Tibial artery (tissue), 4 donors: ENCODE measurements at regions of chr6 and their contacts with region 1.

Region 1: GRCh38 chr6:121430514-121431460 is 4.7 kb upstream of the GJA1 start:
- DNase-seq: no peak
- H3K4me3 ChIP-seq: no peak overlapping the region
- H3K27ac ChIP-seq: peak overlapping the region in 1 of 2 donors; percentile 23
- H3K4me1 ChIP-seq: peaks cover 0 to 5% (median 0%) of the 10 kb centered on the region in 4 donors
- H3K27me3 ChIP-seq: no peaks in the 10 kb centered on the region
- CTCF ChIP-seq: peak; percentile 63 to 85

Region 2: GRCh38 chr6:121521892-121522664 is 91.3 kb after region 1 on chr6:
- intact Hi-C with region 1: loop called (anchors 10 kb)
- DNase-seq: peak in 1 of 2 donors; percentile 45
- H3K4me3 ChIP-seq: peak overlapping the region; percentile 22 to 26
- H3K27ac ChIP-seq: peak overlapping the region; percentile 72 to 84
- H3K4me1 ChIP-seq: peaks cover 0 to 56% (median 8%) of the 10 kb centered on the region in 4 donors
- H3K27me3 ChIP-seq: no peaks in the 10 kb centered on the region
- CTCF ChIP-seq: no peak

Region 3: DNA sequence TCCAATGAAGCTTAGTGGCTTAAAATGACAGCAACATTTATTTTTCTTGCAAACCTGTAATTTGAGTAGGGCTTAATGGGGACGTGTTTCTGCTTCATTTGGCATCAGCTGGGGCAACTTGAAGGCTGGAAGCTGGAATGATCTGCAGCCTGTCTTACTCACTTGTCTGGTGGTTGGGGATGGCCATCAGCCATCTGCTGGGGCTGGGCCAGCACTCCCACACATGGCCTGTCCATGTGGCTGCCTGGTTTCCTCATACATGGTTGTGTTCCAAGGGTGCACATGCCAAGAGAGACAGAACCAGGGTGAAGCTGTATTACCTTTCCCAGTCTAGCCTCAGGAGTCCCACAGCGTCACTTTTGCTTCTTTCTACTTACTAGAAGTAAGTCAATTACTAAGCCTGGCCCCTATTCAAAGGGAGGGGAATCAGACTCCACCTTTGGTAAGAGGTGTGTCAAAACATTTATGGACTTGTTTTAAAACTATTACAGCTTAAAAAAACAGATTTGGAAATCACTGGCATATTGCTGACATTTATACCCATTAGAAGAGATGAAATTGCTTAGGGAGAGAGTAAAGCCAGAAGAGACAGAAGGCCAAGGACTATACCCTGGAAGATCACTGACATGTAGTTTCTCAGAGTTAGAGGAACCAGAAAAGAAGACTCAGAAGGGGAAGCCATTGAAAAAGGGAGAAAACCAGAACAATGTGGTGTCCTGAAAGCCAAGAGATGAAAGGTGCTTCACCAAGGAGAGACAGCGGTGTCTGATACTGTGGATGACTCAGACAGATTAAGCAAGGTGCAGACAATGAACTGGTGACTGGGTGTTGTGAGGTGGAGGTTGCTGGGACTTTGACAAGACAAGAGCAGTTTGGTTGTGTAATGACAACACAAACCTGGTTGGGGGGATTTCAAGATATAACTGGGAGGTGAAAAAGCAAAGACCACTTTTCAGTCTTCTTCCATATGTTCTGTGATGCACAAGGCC is 349.8 kb after region 1 on chr6:
- intact Hi-C with region 1: loop called (anchors 10 kb)
- DNase-seq: peak; percentile 88 to 96
- H3K4me3 ChIP-seq: no peak overlapping the region
- H3K27ac ChIP-seq: peak overlapping the region; percentile 56 to 68
- H3K4me1 ChIP-seq: peaks cover 0 to 38% (median 11%) of the 10 kb centered on the region in 4 donors
- H3K27me3 ChIP-seq: no peaks in the 10 kb centered on the region
- CTCF ChIP-seq: no peak

Region 4: GRCh38 chr6:121849477-121849876 is 418.7 kb after region 1 on chr6:
- intact Hi-C with region 1: loop called (anchors 5 kb)
- DNase-seq: peak in 1 of 2 donors; percentile 52
- H3K4me3 ChIP-seq: no peak overlapping the region
- H3K27ac ChIP-seq: no peak overlapping the region
- H3K4me1 ChIP-seq: peaks cover 0 to 9% (median 3%) of the 10 kb centered on the region in 4 donors
- H3K27me3 ChIP-seq: no peaks in the 10 kb centered on the region
- CTCF ChIP-seq: peak; percentile 69

Region 5: DNA sequence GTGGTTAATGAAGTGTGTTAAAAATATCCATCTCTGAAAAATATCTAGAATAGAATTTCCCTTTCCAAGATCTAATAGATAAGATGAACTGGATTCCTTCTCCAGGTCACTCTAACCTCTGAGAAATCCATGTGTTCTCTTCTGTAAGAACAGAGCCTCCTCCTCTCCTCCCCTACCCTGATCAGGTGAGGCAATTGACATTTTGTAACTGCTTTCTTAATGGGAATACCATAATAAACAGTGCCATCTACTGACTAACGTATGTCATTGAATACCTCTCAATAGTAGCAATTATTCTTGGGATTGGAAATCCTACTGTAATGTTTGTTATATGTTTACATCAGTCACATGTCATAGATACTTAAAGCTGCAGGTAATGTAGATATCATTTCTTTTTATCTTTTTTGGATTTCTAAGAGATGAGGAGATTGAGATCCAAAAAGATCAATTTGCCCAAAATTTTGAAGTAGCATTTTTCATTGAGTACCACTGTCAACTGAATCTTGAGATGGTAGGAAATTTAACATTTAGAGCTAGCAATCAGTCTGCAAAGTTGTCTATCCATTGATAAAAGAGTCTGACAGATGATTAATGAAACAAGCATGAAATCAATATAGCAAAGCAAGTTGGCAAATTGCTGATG is 602.9 kb after region 1 on chr6:
- intact Hi-C with region 1: loop called (anchors 5 kb)
- DNase-seq: no peak
- H3K4me3 ChIP-seq: no peak overlapping the region
- H3K27ac ChIP-seq: no peak overlapping the region
- H3K4me1 ChIP-seq: no peaks in the 10 kb centered on the region
- H3K27me3 ChIP-seq: no peaks in the 10 kb centered on the region
- CTCF ChIP-seq: peak; percentile 63 to 72

Region 6: DNA sequence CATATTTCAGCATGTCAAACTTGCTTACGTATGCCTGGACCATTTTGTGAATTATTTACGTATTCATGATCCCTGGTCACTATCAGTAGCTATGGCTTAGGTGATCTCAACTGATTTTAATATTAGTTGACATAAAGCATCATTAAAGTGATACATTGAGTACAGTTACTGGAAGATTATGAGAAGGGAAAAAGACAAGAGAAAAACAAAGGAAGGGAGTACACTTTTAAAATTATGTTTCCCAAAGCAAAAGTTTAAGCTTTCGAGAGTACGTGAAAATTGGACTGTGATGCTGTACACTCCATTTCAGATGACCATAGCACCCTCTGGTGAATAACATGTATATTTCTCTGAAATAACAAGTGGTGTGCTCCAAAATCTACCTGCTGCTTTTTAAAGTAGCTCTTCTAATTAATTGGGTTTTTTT is 753.6 kb after region 1 on chr6:
- intact Hi-C with region 1: loop called (anchors 10 kb)
- DNase-seq: no peak
- H3K4me3 ChIP-seq: peak overlapping the region in 1 of 2 donors; percentile 14
- H3K27ac ChIP-seq: no peak overlapping the region
- H3K4me1 ChIP-seq: peaks cover 0 to 6% (median 3%) of the 10 kb centered on the region in 4 donors
- H3K27me3 ChIP-seq: no peaks in the 10 kb centered on the region
- CTCF ChIP-seq: peak; percentile 42 to 53